GM12878 (cell line): ENCODE measurements at regions of chrX and their contacts with region 1.

Region 1: GRCh38 chrX:119981286-119982070 is 37.9 kb upstream of the NKAP start:
- DNase-seq: no peak
- ATAC-seq: peak; percentile 90
- H3K4me3 ChIP-seq: no peak overlapping the region
- H3K27ac ChIP-seq: no peak overlapping the region
- H3K4me1 ChIP-seq: no peaks in the 10 kb centered on the region
- H3K27me3 ChIP-seq: no peaks in the 10 kb centered on the region; a peak in 1 of 4 replicates
- CTCF ChIP-seq: peak; percentile 61 to 67 (median 62)
- EP300 ChIP-seq: no peak
- POLR2A ChIP-seq: no peak
- RAD21 ChIP-seq: peak; percentile 61

Region 2: GRCh38 chrX:119745283-119745848 is 236.1 kb before region 1 on chrX:
- CTCF ChIA-PET with region 1: no interaction called
- POLR2A ChIA-PET with region 1: no interaction called
- RAD21 ChIA-PET with region 1: no interaction called
- SMC1A ChIA-PET with region 1: no interaction called
- in situ Hi-C with region 1: no loop called
- intact Hi-C with region 1: no loop called
- DNase-seq: no peak
- ATAC-seq: no peak
- H3K4me3 ChIP-seq: no peak overlapping the region
- H3K27ac ChIP-seq: no peak overlapping the region
- H3K4me1 ChIP-seq: no peaks in the 10 kb centered on the region
- H3K27me3 ChIP-seq: no peaks in the 10 kb centered on the region
- CTCF ChIP-seq: no peak
- EP300 ChIP-seq: no peak
- POLR2A ChIP-seq: no peak
- RAD21 ChIP-seq: no peak

Region 3: DNA sequence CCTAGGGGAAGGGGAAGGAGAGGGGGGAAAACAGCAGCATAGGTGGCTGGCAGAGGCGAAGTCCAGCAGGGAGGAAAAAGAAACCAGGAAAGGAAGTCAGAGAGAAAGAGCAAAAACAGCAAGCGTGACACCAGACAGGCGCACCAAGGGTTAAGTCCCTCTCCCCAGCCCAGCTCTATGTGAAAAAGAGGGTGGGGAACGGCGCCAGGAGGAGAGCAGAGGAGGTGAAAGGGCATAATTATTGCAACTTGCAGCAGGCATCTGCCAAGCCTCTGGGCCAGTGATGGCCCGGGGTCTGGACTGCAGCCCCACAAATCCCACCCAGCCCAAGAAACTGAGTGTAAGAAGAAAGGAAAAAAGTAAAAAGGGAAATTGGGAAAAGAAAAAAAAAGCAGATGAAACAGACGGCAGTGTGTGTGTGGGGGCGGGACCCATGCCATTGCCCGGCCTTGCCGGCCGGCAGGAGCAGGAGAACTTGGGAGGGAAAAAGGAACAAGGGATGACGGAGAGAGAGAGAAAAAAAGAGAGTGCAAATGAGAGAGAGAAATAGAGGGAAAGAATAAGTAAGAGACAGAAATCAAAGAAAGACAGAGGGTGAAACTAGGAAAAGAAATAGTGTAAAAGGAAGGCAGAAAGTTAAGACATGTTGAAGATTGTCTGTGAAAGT is 162.8 kb after region 1 on chrX:
- CTCF ChIA-PET with region 1: interaction called, 12 read pairs
- POLR2A ChIA-PET with region 1: no interaction called
- RAD21 ChIA-PET with region 1: no interaction called
- SMC1A ChIA-PET with region 1: no interaction called
- in situ Hi-C with region 1: loop called (anchors 25 kb)
- intact Hi-C with region 1: loop called (anchors 10 kb)
- DNase-seq: no peak
- ATAC-seq: peak; percentile 62
- H3K4me3 ChIP-seq: peak overlapping the region; percentile 22; the same call in 1 of the 2 replicates
- H3K27ac ChIP-seq: no peak overlapping the region
- H3K4me1 ChIP-seq: no peaks in the 10 kb centered on the region
- H3K27me3 ChIP-seq: no peaks in the 10 kb centered on the region
- CTCF ChIP-seq: no peak
- EP300 ChIP-seq: no peak
- POLR2A ChIP-seq: no peak
- RAD21 ChIP-seq: no peak